HCT116 (cell line): ENCODE measurements at regions of chr16 and their contacts with region 1.

Region 1: DNA sequence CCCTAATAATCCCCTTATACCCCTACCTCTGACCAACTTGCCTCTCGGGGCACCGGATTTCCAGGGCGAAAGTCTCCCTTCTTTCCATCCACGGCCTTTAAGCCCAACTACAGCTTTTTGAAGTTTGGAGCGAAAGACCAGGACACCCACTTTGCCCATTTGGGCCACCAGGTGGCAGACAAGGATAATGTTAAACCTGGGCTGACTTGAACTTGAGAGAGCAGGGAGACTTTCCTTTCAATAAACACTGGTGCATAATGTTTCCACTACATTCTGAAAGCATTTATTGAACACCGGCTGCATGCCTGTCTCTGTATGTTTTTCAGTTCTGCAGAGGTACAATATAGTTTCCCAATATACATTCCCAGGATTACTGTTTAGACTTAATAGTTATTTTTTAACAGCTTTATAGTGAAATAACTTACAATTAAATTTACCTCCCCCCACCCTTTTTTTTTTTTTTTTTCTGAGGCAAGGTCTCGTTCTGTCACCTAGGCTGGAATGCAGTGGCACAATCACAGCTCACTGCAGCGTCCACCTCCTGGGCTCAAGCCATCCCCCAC is 6.9 kb upstream of the CES3 start:
- DNase-seq: peak; percentile 74
- ATAC-seq: peak; percentile 95
- H3K4me3 ChIP-seq: no peak overlapping the region
- H3K27ac ChIP-seq: peak overlapping the region; percentile 3; the same call in 1 of the 2 replicates
- H3K4me1 ChIP-seq: peaks cover 11 to 12% of the 10 kb centered on the region in 2 experiments; a peak in 3 of 4 replicates
- H3K27me3 ChIP-seq: no peaks in the 10 kb centered on the region
- CTCF ChIP-seq: peak; percentile 82 to 93 (median 88)
- POLR2A ChIP-seq: no peak
- RAD21 ChIP-seq: peak; percentile 96

Region 2: DNA sequence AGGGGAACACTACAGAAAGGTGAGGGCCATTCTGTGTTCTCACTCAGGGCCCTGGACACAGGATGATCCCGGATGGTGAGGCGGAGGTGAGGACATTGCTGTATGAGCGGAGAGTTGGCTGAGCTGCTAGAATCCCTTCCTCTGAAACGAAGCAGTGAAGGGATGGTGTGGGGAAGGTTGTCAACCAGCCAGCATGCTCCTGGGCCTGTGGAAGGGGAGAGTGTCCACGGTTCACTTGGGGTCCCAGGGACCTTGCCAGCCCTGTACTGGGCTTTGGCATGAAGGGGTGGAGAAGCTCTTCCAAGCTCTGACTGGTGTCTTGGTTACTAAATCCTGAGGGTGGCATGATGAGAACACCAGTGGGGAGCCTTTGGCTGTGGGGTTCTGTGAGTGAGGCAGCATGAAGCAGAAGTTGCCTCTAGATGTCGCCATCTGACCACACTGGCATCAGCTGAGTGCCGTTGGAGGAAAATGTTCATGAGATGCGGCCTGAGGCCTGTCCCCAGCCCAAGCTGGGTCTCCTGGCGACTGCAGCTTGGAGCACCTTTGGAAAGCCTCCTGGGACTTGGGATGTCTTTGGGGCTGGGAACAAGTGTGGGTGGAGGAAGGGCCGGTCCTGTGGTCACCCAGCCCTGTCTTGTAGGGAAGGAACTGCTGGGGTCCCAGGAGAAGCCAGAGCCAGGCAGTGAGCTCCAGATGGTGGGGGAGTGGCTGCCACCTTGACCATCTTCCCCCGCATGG is 59.1 kb before region 1 on chr16:
- CTCF ChIA-PET with region 1: interaction called, 6 read pairs
- POLR2A ChIA-PET with region 1: no interaction called
- RAD21 ChIA-PET with region 1: no interaction called
- intact Hi-C with region 1: loop called (anchors 5 kb)
- DNase-seq: peak; percentile 45
- ATAC-seq: peak; percentile 93
- H3K4me3 ChIP-seq: no peak overlapping the region
- H3K27ac ChIP-seq: no peak overlapping the region
- H3K4me1 ChIP-seq: peaks cover 4 to 11% of the 10 kb centered on the region in 2 experiments; a peak in 3 of 4 replicates
- H3K27me3 ChIP-seq: no peaks in the 10 kb centered on the region
- CTCF ChIP-seq: peak; percentile 80 to 92 (median 89)
- POLR2A ChIP-seq: no peak
- RAD21 ChIP-seq: peak; percentile 97

Region 3: DNA sequence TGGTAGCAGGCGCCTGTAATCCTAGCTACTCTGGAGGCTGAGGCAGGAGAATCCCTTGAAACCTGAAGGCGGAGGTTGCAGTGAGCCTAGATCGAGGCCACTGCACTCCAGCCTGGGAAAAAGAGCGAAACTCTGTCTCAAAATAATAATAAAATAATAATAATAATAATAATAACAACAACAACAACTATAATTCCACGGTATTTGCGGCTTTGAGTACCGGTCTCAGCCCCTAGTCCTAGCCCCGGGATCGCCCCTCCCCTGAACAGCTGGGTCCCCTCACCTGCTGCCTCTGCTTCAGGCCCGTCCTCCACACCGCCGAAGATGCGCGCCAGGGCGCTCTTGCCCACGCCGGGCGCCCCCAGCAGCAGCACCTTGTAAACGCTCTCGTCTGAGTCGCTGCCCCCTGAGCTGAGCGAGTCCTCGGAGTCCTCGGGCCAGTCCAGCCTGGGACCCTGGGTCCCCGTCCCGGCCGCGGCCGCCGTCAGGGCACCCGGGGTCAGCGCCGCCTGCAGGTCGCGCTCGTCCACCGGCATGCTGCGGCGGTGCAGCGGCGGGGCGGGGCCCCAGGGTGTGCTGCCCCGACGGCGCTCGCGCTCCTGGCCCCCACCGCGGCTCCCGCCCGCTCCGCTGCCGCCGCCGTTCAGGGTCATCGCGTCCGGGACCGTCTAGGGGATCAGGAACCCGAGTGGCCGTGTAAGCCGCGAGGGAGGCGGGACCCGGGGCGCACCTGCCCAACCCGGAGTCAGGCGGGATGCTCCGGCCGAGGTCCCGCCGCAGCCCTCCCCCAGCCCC is 29.5 kb before region 1 on chr16:
- CTCF ChIA-PET with region 1: no interaction called
- POLR2A ChIA-PET with region 1: no interaction called
- RAD21 ChIA-PET with region 1: no interaction called
- intact Hi-C with region 1: no loop called
- DNase-seq: no peak
- ATAC-seq: peak; percentile 85
- H3K4me3 ChIP-seq: peak overlapping the region; percentile 15 to 42
- H3K27ac ChIP-seq: no peak overlapping the region; the same call in 1 of the 2 replicates
- H3K4me1 ChIP-seq: peaks cover 21 to 50% of the 10 kb centered on the region in 2 experiments
- H3K27me3 ChIP-seq: no peaks in the 10 kb centered on the region
- CTCF ChIP-seq: peak in 1 of 3 experiments; percentile 45; a peak in 3 of 6 replicates
- POLR2A ChIP-seq: no peak
- RAD21 ChIP-seq: no peak

Region 4: GRCh38 chr16:67159593-67160406 is 205.6 kb after region 1 on chr16 and contains the starts of genes FBXL8 and TRADD:
- CTCF ChIA-PET with region 1: interaction called, 10 read pairs
- POLR2A ChIA-PET with region 1: no interaction called
- RAD21 ChIA-PET with region 1: interaction called in 1 of 2 experiments, 3 read pairs
- intact Hi-C with region 1: loop called (anchors 5 kb)
- DNase-seq: no peak
- ATAC-seq: peak; percentile 74
- H3K4me3 ChIP-seq: peak within 1 kb of the TSS; percentile 80 to 98
- H3K27ac ChIP-seq: peak within 1 kb of the TSS; percentile 69
- H3K4me1 ChIP-seq: peaks cover 18 to 44% of the 10 kb centered on the region in 2 experiments
- H3K27me3 ChIP-seq: no peaks in the 10 kb centered on the region
- CTCF ChIP-seq: peak in 2 of 3 experiments; percentile 44 to 51; a peak in 5 of 6 replicates
- POLR2A ChIP-seq: no peak
- RAD21 ChIP-seq: no peak
- total RNA-seq, gene FBXL8: 27.8 TPM
- total RNA-seq, gene TRADD: 20.5 TPM

Region 5: DNA sequence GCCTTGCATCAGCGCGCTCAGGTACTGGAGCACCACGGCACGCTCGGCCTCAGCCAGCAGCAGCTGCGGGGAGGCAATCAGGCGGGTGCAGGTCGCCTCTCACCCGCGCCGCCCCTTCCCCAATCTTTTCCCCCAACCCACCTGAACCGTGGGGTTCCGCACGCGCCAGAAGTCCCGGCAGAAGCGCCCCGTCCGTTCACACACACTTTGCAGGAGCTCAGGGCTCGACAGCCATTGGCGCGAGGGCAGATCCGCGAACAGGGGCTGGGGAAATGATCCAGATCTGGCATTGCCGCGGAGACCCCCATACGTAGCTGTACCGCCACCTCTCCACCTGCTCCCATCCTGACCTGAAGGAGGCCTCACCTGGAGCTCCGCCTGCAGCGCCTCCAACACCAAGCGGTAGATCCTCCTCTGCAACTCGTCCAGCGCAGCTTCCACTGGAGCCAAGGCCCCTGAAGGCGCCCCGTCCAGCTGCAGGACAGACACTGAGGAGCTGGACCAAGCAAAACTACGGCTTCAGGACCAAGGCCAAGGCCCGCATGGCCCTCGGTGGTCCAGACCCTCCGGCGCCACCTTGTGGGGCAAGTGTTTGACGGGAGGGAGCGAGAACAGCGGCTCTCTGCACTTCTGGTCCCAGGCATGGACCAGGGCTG is 230.9 kb after region 1 on chr16:
- CTCF ChIA-PET with region 1: interaction called, 10 read pairs
- POLR2A ChIA-PET with region 1: no interaction called
- RAD21 ChIA-PET with region 1: no interaction called
- intact Hi-C with region 1: no loop called
- DNase-seq: peak; percentile 67
- ATAC-seq: peak; percentile 61
- H3K4me3 ChIP-seq: no peak overlapping the region
- H3K27ac ChIP-seq: no peak overlapping the region; the same call in 1 of the 2 replicates
- H3K4me1 ChIP-seq: peaks cover 10 to 43% of the 10 kb centered on the region in 2 experiments; a peak in 3 of 4 replicates
- H3K27me3 ChIP-seq: no peaks in the 10 kb centered on the region
- CTCF ChIP-seq: peak in 2 of 3 experiments; percentile 80; a peak in 4 of 6 replicates
- POLR2A ChIP-seq: no peak
- RAD21 ChIP-seq: no peak

Region 6: DNA sequence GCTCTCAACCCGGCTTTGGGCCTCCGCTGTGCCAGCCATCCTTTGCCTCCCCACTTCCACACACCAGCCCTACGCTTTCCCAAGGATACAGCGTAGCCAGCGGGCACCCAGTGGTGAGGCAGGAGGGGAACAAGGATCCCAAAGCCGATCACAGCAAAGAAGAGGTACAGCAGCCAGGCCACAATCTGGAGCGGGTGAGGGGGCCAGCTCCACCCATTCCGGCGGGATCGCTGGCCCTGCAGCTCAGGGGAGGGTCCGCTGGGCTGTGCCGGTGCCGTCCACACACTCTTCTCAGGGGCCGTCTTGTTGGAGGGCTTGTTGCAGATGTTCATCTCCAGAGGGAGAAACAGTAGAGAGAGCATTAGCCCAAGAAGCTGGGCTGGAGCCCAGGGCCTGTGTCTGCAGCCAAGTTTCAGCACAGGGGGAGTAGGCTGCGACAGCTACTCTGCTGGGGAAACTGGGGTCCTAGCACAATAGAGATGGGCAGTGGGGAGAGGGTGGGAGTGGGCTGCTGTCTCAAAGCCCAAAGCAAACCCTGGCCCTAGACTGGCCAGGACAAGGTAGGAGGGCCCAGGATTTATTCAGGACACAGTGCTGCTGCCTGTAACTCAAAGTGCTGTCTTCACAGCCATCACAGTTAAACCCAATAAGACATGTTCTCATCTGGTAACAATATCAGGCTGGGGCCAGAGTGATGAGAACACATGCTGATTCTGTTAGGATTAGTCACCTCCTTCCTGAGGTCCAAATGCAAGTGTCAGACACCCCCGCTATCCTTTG is 452.1 kb after region 1 on chr16:
- CTCF ChIA-PET with region 1: no interaction called
- POLR2A ChIA-PET with region 1: no interaction called
- RAD21 ChIA-PET with region 1: no interaction called
- intact Hi-C with region 1: no loop called
- DNase-seq: no peak
- ATAC-seq: no peak
- H3K4me3 ChIP-seq: no peak overlapping the region
- H3K27ac ChIP-seq: no peak overlapping the region
- H3K4me1 ChIP-seq: peaks cover 23 to 38% of the 10 kb centered on the region in 2 experiments
- H3K27me3 ChIP-seq: no peaks in the 10 kb centered on the region
- CTCF ChIP-seq: no peak
- POLR2A ChIP-seq: no peak
- RAD21 ChIP-seq: no peak

Region 7: GRCh38 chr16:67464565-67464964 is 510.4 kb after region 1 on chr16:
- CTCF ChIA-PET with region 1: interaction called, 3 read pairs
- POLR2A ChIA-PET with region 1: no interaction called
- RAD21 ChIA-PET with region 1: no interaction called
- intact Hi-C with region 1: loop called (anchors 1 kb)
- DNase-seq: no peak
- ATAC-seq: no peak
- H3K4me3 ChIP-seq: no peak overlapping the region
- H3K27ac ChIP-seq: no peak overlapping the region
- H3K4me1 ChIP-seq: peaks cover 6 to 19% of the 10 kb centered on the region in 2 experiments; a peak in 3 of 4 replicates
- H3K27me3 ChIP-seq: no peaks in the 10 kb centered on the region
- CTCF ChIP-seq: no peak
- POLR2A ChIP-seq: no peak
- RAD21 ChIP-seq: no peak

Region 8: DNA sequence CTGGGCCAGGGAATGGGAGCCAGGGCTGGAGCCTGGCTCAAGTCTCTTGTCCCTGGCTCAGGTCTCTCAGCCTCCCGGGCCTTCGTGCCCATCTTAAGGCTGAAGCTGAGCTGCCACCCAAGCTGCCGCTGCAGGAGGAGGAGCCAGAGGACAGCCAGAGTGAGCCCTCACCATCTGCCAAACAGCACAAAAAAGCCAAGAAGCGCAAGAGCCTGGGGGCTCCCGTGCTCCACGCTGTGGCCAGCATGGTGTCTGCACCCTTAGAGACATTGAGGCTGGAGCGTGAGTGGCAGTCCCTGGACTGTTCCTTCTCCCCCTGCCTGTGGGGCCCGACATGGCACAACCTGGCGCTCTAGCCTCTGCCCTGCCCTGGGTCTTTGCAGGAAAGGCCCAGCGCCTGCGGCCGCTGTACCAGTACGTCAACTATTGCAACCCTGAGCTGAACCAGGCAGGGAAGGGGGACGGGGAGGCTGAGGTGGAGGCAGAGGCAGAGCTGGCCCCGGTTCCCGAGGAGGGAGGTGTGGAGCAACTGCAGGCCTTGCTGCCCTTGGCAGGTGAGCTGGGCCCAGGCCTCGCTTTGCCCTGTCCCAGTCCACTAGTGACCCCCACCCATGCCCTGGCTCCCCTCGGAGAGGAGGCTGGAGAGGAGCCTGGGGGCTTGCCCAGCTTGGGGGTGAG is 713.8 kb after region 1 on chr16:
- CTCF ChIA-PET with region 1: no interaction called
- POLR2A ChIA-PET with region 1: no interaction called
- RAD21 ChIA-PET with region 1: no interaction called
- intact Hi-C with region 1: loop called (anchors 10 kb)
- DNase-seq: peak; percentile 77
- ATAC-seq: peak; percentile 83
- H3K4me3 ChIP-seq: no peak overlapping the region
- H3K27ac ChIP-seq: peak overlapping the region; percentile 50; the same call in 1 of the 2 replicates
- H3K4me1 ChIP-seq: peaks cover 6 to 41% of the 10 kb centered on the region in 2 experiments; a peak in 3 of 4 replicates
- H3K27me3 ChIP-seq: no peaks in the 10 kb centered on the region
- CTCF ChIP-seq: peak in 2 of 3 experiments; percentile 75 to 88; a peak in 4 of 6 replicates
- POLR2A ChIP-seq: no peak
- RAD21 ChIP-seq: no peak